Activated T-helper 1 cell treated with anti-CD3 and anti-CD28 coated beads, Interleukin-12 subunit alpha, Interleukin-12 subunit beta, Interleukin-2, Interleukin-4 antibody, amounts not matched to agents 30 ng/mL and 10 ng/mL and 1 ng/mL, durations not matched to agents 14 hours and 24 hours and 36 hours (primary cell): ENCODE measurements at regions of chr19 and their contacts with region 1.

Region 1: GRCh38 chr19:16495982-16496612 is at the starts of genes C19orf44 and CALR3:
- DNase-seq: peak; percentile 98
- H3K4me3 Mint-ChIP-seq: peak within 1 kb of the TSS; percentile 93
- H3K27ac Mint-ChIP-seq: peak within 1 kb of the TSS; percentile 87
- H3K4me1 Mint-ChIP-seq: peaks cover 9% of the 10 kb centered on the region
- H3K27me3 Mint-ChIP-seq: no peaks in the 10 kb centered on the region
- total RNA-seq, gene C19orf44: 4.4 and 5.6 TPM in 2 replicates
- total RNA-seq, gene CALR3: not detected in 2 replicates

Region 2: DNA sequence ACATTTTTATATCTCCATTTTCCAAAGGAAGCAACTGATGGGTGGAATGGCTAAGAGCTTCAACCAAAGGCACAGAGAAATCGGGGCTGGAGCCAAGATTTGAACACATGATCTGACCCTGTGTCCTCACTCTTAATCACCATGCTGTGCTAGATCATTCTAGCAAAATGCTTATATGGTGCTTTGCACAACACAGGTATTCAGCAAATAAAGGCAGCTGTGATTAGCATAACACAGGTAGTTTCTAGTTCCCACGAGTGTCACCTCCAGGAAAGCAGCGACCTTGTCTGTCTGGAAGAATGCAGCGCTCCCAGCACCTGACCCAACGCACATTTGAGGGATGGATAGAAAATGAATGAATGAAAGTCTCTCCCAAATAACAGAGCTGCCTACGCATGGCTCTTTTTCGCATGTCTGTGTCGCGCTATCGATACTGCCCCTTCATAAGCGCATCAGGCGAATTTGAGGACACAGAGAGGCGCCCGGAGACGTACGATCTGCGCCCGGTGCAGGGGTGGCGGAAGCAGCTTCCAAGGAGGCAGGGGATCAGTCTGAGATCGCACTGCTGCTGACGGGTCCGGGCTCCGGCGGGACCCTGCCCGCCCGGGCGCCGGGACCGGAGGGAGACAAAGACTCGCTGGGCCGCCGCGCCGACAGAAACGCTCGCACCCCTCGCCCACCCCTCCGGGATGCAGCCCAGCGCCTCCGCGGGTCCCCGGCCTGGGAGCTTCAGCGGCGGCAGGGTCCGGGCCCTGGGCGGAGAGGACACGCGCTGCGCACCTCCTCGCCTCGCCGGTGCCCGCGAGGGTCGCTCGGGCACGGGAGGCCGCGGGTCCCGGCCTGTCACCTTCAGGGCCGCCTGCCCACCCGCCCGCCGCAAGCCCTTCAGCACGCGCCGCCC is 24.9 kb before region 1 on chr19:
- intact Hi-C with region 1: loop called (anchors 1 kb)
- DNase-seq: peak; percentile 22
- H3K4me3 Mint-ChIP-seq: peak overlapping the region; percentile 90
- H3K27ac Mint-ChIP-seq: peak overlapping the region; percentile 72
- H3K4me1 Mint-ChIP-seq: peaks cover 28% of the 10 kb centered on the region
- H3K27me3 Mint-ChIP-seq: no peaks in the 10 kb centered on the region

Region 3: DNA sequence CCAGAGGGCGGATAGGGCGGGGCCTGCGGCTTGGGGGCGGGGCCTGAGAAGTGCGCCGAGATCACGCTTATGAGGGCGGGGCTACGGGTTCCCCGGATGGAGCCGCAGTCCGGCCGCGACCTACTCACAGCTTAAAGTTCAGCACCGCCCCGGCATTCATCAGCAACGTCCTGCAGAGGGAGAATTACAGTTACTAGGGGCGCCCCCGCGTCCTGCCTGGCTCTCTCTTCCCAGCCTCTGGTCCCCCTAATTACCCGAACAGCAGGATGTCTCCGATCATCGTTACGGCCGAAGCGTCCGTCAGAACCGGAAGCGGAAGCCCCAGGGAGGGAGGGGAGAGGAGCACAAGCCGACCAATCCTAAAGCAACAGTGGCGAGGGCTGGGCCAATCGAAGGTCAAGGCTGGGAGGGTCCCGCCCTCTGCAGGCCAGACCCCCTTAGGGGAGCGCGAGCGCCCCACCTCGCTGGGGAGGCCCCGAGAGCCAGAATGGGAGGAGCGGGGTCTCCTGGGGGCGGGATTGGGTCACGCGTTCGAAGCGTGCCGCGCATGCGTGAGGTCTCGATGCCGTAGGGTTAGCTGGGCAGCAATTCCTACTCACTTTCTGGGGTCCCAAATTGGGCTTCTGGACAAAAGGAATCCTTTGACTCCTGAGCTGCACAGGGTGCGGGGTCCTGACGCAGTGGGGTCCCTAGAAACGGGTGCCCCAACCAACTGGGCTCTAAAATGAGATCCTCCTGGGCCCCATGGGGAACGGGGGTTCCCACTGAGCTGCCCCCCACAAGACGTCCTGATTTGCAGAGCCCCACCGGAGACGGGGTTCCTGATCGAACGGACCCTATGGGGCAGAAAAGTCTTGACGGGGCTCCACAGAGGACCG is 164.0 kb after region 1 on chr19 and contains the start of gene SMIM7:
- intact Hi-C with region 1: loop called (anchors 1 kb)
- DNase-seq: peak; percentile 98
- H3K4me3 Mint-ChIP-seq: peak within 1 kb of the TSS; percentile 94
- H3K27ac Mint-ChIP-seq: peak within 1 kb of the TSS; percentile 97
- H3K4me1 Mint-ChIP-seq: peaks cover 27% of the 10 kb centered on the region
- H3K27me3 Mint-ChIP-seq: peaks cover 13% of the 10 kb centered on the region
- total RNA-seq, gene SMIM7: 69.3 and 72.7 TPM in 2 replicates